ENCODE measurements at regions of chr16 and their contacts with region 1.

Region 1: DNA sequence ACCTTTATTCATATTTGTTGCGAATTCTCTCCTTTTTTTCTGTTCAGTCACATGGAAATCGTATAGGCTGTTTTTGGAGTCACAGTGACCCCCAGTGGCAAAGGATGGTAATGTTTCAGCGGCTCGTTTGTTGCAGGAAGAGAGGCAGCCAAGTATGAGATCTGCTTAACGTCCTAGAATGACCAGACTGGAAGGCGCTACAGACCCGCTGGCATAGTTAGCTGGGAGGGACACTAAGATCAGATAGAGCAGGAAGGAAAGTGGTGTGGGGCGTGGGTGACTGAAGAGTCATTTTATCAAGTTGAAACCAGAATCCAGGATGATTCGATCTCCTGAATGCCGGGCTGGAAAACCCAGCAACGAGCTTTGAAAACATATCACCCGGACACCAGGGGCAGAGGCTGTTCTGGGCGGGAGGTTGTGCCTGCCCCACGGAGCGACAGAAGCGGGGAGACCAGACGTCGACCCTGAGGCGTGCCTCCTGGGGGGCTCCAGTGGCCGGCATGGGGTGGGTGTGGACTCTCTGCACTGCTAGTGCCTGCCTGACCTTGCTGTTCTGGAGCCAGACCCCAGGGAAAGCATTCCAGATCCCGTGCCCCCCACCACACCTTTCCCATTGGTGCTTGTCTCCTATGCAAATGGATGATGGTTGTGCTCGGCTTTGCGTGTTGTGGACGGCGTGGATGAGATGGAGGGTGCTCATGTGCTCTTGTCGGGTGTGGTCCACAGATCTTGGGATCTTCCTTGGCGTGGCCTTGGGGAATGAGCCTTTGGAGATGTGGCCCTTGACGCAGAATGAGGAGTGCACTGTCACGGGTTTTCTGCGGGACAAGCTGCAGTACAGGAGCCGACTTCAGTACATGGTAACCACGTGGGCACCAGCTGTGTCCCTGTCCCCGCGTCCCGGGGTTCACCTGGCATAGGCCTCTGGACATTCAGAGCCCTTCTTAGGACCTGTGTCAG is 7.7 kb downstream of the IL34 start:
- DNase-seq: peak; percentile 44 to 96
- H3K4me3 ChIP-seq: no peak overlapping the region
- H3K27ac ChIP-seq: no peak overlapping the region
- H3K4me1 ChIP-seq: peaks cover 0 to 3% (median 0%) of the 10 kb centered on the region in 4 experiments; a peak in 3 of 7 replicates
- H3K27me3 ChIP-seq: no peaks in the 10 kb centered on the region; a peak in 2 of 7 replicates
- CTCF ChIP-seq: peak; percentile 49 to 86 (median 83)
- EP300 ChIP-seq: no peak
- POLR2A ChIP-seq: no peak
- RAD21 ChIP-seq: peak; percentile 97

Region 2: DNA sequence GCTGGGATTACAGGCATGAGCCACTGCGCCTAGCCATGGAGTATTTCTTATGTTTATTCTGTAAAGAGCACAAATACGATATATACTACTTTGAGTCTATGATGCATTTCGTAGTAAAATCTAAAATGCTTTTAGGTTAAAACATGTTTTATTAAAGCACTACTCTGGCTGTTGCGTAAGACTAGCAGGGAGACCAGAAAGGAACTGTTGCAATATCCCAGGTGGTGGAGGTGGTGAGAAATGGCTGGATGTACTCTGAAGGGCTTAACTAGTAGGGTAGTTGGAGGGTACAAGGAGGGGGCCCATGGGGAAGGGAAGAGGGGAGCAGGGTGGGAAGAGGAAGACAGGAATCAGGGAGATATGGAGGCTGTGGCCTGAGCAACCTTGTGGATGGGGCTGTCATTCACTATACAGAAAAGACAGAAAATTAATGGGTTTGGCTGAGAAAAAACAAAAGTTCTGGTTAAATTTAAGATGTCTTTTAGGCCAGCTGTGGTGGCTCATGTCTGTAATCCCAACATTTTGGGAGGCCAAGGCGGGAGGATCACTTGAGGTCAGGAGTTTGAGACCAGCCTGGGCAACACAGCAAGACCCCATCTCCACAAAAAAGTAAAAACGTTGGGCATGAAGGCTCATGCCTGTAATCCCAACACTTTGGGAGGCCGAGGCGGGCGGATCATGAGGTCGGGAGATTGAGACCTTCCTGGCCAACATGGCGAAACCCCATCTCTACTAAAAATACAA is 251.0 kb before region 1 on chr16:
- CTCF ChIA-PET with region 1: no interaction called
- POLR2A ChIA-PET with region 1: no interaction called
- DNase-seq: no peak
- H3K4me3 ChIP-seq: no peak overlapping the region
- H3K27ac ChIP-seq: no peak overlapping the region; the same call in 1 of the 2 replicates
- H3K4me1 ChIP-seq: peaks cover 2 to 13% (median 4%) of the 10 kb centered on the region in 4 experiments; a peak in 6 of 7 replicates
- H3K27me3 ChIP-seq: no peaks in the 10 kb centered on the region
- CTCF ChIP-seq: no peak
- EP300 ChIP-seq: no peak
- POLR2A ChIP-seq: no peak
- RAD21 ChIP-seq: no peak

Region 3: GRCh38 chr16:70508752-70509151 is 145.3 kb before region 1 on chr16:
- CTCF ChIA-PET with region 1: no interaction called
- POLR2A ChIA-PET with region 1: no interaction called
- DNase-seq: no peak
- H3K4me3 ChIP-seq: no peak overlapping the region
- H3K27ac ChIP-seq: no peak overlapping the region
- H3K4me1 ChIP-seq: no peaks in the 10 kb centered on the region
- H3K27me3 ChIP-seq: no peaks in the 10 kb centered on the region
- CTCF ChIP-seq: no peak
- EP300 ChIP-seq: no peak
- POLR2A ChIP-seq: no peak
- RAD21 ChIP-seq: no peak

Region 4: DNA sequence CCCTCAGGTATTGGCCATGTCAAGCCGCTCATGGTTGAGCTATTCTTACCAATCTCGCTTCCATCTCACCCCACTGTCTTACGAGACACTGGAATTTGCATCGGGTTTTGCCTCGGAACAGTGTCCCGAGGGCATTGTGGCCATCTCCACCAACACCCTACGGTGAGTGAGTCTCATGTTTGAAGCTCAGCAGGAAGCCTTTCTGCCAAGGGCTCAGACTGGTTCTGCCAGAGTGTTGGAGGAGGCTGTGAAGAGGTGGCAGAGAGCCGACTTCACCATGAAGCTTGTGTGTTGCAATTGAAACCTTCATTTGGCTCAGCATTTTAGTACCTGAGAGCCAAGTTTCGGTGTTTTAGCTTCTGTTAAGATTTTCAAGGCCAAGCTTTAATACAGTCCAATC is 92.5 kb before region 1 on chr16:
- CTCF ChIA-PET with region 1: interaction called, 35 read pairs
- POLR2A ChIA-PET with region 1: interaction called, 6 read pairs
- DNase-seq: no peak
- H3K4me3 ChIP-seq: no peak overlapping the region
- H3K27ac ChIP-seq: no peak overlapping the region
- H3K4me1 ChIP-seq: no peaks in the 10 kb centered on the region
- H3K27me3 ChIP-seq: no peaks in the 10 kb centered on the region
- CTCF ChIP-seq: no peak
- EP300 ChIP-seq: no peak
- POLR2A ChIP-seq: no peak
- RAD21 ChIP-seq: no peak

Region 5: GRCh38 chr16:70576431-70577255 is 77.4 kb before region 1 on chr16:
- CTCF ChIA-PET with region 1: interaction called, 65 read pairs
- POLR2A ChIA-PET with region 1: interaction called, 26 read pairs
- DNase-seq: no peak
- H3K4me3 ChIP-seq: no peak overlapping the region
- H3K27ac ChIP-seq: no peak overlapping the region
- H3K4me1 ChIP-seq: no peaks in the 10 kb centered on the region; a peak in 1 of 7 replicates
- H3K27me3 ChIP-seq: no peaks in the 10 kb centered on the region
- CTCF ChIP-seq: no peak
- EP300 ChIP-seq: no peak
- POLR2A ChIP-seq: peak; percentile 38 to 53; a peak in 1 of 3 replicates
- RAD21 ChIP-seq: no peak

Region 6: DNA sequence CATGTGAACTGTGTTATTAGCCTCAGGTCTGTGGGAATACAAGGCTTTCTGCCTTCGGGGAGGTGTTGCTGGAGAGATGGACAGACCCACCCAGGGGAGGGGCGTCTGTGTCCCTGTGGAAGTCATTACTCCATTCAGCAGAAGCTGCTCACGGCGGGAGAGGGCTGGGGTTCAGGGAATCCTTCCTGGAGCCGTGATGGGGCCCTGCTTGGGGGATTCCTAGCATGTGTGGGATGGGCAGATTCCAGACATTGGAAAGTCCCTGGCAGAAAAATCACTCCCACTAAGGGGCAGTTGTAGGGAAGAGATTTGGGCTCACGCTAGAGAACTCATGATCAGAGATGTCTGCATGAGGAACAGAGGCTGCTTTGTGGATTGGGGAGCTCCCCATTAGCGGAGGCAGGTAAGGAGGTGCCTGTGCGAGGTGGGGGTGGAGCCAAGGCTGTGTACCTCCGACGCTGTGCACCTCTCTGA is 64.1 kb before region 1 on chr16:
- CTCF ChIA-PET with region 1: interaction called, 56 read pairs
- POLR2A ChIA-PET with region 1: no interaction called
- DNase-seq: no peak
- H3K4me3 ChIP-seq: no peak overlapping the region
- H3K27ac ChIP-seq: no peak overlapping the region
- H3K4me1 ChIP-seq: peaks cover 2 to 7% (median 3%) of the 10 kb centered on the region in 4 experiments; a peak in 4 of 7 replicates
- H3K27me3 ChIP-seq: no peaks in the 10 kb centered on the region
- CTCF ChIP-seq: no peak
- EP300 ChIP-seq: no peak
- POLR2A ChIP-seq: no peak
- RAD21 ChIP-seq: no peak

Region 7: GRCh38 chr16:70610273-70611223 is 43.5 kb before region 1 on chr16:
- CTCF ChIA-PET with region 1: interaction called, 32 read pairs
- POLR2A ChIA-PET with region 1: interaction called, 59 read pairs
- DNase-seq: no peak
- H3K4me3 ChIP-seq: no peak overlapping the region
- H3K27ac ChIP-seq: no peak overlapping the region
- H3K4me1 ChIP-seq: peaks cover 0 to 3% (median 0%) of the 10 kb centered on the region in 4 experiments; a peak in 2 of 7 replicates
- H3K27me3 ChIP-seq: no peaks in the 10 kb centered on the region
- CTCF ChIP-seq: no peak
- EP300 ChIP-seq: no peak
- POLR2A ChIP-seq: no peak
- RAD21 ChIP-seq: no peak

Region 8: GRCh38 chr16:70638814-70639792 is 15.0 kb before region 1 on chr16:
- CTCF ChIA-PET with region 1: interaction called, 33 read pairs
- POLR2A ChIA-PET with region 1: interaction called, 6 read pairs
- DNase-seq: no peak
- H3K4me3 ChIP-seq: no peak overlapping the region
- H3K27ac ChIP-seq: no peak overlapping the region
- H3K4me1 ChIP-seq: peaks cover 0 to 2% (median 0%) of the 10 kb centered on the region in 4 experiments; a peak in 1 of 7 replicates
- H3K27me3 ChIP-seq: no peaks in the 10 kb centered on the region
- CTCF ChIP-seq: peak in 1 of 3 experiments; percentile 3; a peak in 1 of 4 replicates
- EP300 ChIP-seq: no peak
- POLR2A ChIP-seq: no peak
- RAD21 ChIP-seq: no peak

Region 9: DNA sequence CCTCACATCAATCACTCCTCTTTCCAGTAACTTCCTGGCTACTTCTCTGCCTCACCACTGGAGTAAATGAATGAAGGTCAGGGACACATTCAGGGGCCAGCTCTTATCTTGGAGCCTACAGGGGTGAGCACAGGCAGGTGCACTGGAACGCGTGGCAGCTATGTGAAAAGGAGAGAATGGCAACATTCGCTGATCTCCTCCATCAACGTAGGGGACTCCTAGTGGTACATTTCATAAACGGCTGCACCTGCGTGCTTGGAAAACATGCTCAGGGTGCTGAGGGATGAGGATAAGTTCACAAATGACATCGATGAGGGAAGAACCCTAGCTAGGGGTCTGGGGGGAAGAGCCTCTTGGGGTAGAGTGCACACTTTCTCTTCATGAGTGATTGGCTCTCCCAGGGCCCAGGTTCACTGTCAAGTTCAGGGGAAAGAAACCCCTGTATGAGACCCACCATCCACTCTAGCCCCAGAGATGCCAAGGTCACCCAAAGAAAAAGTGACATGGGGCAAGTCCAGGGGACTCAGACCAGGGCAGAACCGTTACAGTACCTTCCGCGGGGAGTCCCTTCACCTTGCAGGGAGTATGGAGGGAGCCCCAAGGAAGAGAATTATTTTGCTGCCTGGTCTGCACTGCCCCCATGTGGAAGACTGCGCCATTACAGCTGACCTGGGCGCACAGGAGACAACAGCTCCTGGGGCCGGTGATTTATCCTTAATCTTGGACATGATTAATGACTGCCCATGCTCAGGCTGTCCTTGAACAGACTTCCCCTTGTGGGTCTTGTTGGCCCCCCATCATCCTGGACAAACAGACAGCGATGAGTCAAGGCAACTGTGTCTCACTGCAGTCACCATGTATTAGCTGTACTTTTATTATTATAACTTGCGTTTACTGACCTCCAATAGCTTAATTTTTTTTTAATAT is 116.8 kb after region 1 on chr16:
- CTCF ChIA-PET with region 1: interaction called, 36 read pairs
- POLR2A ChIA-PET with region 1: no interaction called
- DNase-seq: peak in 1 of 2 experiments; percentile 96
- H3K4me3 ChIP-seq: no peak overlapping the region
- H3K27ac ChIP-seq: no peak overlapping the region
- H3K4me1 ChIP-seq: no peaks in the 10 kb centered on the region
- H3K27me3 ChIP-seq: no peaks in the 10 kb centered on the region
- CTCF ChIP-seq: peak; percentile 95 to 97 (median 95)
- EP300 ChIP-seq: no peak
- POLR2A ChIP-seq: no peak
- RAD21 ChIP-seq: peak; percentile 93 to 95

Measured in H1 (cell line).